GM10248 (cell line): ENCODE measurements at regions of chr20 and their contacts with region 1.

Region 1: DNA sequence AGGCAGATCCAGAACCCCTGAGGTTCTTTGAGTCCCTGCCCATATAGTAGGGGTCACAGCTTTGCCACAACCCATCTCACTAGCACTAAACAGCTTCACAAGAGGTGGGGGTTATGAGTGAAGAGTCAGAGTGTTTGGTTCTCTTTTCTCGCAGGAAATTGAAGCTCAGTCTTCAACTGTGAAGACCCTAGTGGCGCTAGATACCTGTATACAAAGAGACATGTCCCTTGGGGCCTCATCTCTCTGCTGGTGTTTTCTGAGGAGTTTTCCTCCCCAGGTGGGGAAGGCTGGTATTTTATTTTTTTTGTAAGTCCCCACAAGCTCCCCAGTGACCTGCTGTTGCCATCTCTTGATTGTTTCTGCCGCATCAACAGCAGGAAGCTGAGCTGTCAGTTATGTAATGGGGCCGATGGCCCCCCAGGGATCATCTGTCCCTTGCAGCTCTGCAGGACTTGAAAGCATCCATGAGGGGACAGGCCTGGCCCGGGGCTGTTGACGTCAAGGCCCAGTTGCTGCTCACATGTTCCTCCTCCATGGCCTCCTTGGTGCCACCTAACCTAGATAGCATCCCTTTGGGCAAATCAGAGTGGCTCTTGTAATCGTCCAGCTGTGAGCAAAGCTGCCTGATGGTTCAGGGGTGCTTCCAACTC is 23.1 kb downstream of the STK35 start:
- DNase-seq: no peak
- CTCF ChIP-seq: no peak

Region 2: DNA sequence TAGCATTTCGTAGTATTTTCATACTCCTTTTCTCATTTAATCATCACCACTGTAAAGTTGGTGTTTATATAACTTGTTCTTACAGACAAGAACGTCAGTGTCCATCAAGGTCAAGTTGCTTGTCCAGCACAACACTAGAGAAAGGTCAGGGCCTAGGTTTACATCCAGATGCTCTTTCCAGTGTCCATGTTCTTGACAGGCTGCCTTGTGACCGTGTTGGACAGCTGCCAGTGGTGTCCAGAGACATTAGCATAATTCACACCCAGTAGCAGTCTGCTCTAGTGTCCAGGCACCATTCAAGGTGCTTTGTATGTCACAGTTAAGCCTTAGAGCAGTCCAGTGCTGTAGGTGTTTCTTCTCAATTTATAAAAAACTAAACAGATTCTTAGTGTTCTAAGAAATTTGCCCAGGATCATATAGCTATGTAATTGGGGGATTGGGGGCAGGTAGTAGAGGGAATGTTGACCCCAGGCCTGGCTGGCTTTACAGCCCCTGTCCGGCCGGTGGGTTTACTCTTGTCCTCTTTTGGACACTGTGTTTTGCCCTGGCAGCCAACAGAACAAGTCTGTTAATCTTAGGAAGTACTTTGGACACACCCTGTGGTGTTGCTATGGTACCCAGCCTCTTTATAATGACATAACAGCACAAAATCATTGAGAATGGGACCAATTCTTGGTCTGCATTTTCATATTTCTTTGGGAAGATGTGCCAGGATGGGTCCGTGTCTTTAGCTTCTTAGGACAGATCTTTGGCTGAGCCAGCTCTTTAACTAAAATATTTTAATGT is 15.1 kb before region 1 on chr20:
- CTCF ChIA-PET with region 1: interaction called, 13 read pairs
- POLR2A ChIA-PET with region 1: interaction called, 4 read pairs
- DNase-seq: no peak
- CTCF ChIP-seq: no peak

Region 3: DNA sequence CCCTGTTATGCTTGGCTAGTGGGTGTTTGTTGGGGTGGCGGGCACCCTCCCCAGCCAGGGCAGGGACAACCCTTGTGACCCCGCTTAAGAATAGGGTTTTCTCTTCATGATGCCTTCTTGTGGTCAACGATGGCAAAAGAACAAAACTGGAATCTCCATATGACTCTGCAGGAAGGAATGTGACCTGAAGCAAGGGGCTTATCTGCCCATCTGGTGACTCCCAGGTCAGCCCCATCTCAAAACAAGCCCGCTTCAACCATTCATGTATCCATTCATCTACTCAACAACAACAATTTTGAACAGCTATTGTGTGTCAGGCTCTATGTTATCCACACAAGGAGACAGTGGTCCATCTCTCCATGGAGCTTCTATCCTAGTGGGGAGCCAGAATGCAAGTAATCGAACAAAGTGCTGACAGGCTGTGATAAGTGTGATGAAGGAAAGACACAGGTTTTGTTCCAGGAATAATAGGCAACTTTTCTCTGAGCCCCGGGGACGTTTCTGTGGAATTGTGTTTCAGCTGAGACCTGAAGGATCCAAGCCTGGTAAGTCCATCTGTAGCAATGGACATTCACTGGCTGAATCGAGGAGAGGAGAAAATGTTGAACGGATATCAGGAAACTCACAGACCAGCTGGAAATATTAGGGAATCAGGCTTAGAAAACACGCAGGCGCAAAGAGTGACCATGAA is 225.3 kb after region 1 on chr20:
- CTCF ChIA-PET with region 1: no interaction called
- POLR2A ChIA-PET with region 1: no interaction called
- DNase-seq: no peak
- CTCF ChIP-seq: no peak